Heart left ventricle (tissue), 16 donors: ENCODE measurements at regions of chr6 and their contacts with region 1.

Region 1: GRCh38 chr6:7219310-7219709 is 93.7 kb downstream of the SSR1 start:
- DNase-seq: peak in 1 of 5 donors; percentile 57
- ATAC-seq: peak in 3 of 4 donors; percentile 16 to 29 (median 28)
- H3K4me3 ChIP-seq: no peak overlapping the region
- H3K27ac ChIP-seq: peak overlapping the region in 11 of 12 donors; percentile 24 to 77 (median 64)
- H3K4me1 ChIP-seq: peaks cover 4 to 75% (median 59%) of the 10 kb centered on the region in 12 donors
- H3K27me3 ChIP-seq: no peaks in the 10 kb centered on the region
- CTCF ChIP-seq: no peak
- POLR2A ChIP-seq: no peak

Region 2: DNA sequence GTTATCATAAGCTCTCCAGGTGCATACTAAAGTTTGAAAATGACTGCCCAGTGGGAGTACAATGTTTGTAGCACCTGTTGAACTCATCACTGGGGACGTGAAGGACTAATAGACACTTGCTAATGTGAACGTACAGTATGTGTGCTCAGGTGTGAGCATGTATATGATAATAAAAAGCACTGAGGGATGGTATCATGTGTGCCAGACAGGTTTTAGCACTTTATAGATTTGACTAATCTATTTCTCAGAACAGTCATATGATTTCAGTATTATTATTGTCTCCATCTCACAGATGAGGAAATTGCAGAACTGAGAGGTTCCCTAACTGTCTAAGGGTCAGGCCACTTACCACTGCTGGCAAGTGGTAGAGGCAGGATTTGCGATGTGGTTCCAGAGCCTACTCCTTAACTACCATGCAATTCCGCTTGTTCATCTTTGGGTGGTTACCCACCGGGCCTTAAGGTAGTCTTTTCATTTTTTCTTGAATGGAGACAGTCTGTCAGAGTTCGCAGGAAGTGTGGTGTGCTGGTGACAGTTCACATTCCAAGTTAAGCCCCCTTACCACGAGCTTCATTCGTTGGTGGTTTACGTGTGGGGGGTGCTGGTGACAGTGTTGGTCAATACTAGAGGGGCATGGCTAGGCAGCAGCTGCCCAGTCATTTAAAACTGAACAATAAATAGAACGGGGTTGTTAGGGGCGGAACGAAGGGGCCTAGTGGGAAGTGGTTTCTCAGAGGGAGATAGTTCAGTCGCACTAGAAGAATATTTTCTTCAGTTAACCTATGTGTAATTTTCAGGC is 64.8 kb before region 1 on chr6:
- intact Hi-C with region 1: loop called in 1 of 10 experiments (anchors 5 kb)
- DNase-seq: no peak
- ATAC-seq: peak in 2 of 4 donors; percentile 27 to 31
- H3K4me3 ChIP-seq: no peak overlapping the region
- H3K27ac ChIP-seq: peak overlapping the region in 1 of 12 donors; percentile 65
- H3K4me1 ChIP-seq: peaks cover 7 to 90% (median 61%) of the 10 kb centered on the region in 12 donors
- H3K27me3 ChIP-seq: no peaks in the 10 kb centered on the region
- CTCF ChIP-seq: no peak
- POLR2A ChIP-seq: no peak

Region 3: GRCh38 chr6:7184502-7184901 is 34.8 kb before region 1 on chr6:
- intact Hi-C with region 1: loop called in 1 of 10 experiments (anchors 5 kb)
- DNase-seq: no peak
- ATAC-seq: no peak
- H3K4me3 ChIP-seq: no peak overlapping the region
- H3K27ac ChIP-seq: no peak overlapping the region
- H3K4me1 ChIP-seq: peaks cover 0 to 23% (median 0%) of the 10 kb centered on the region in 12 donors
- H3K27me3 ChIP-seq: no peaks in the 10 kb centered on the region
- CTCF ChIP-seq: no peak
- POLR2A ChIP-seq: no peak